GM13976 (cell line): ENCODE measurements at regions of chr17 and their contacts with region 1.

Region 1: GRCh38 chr17:31216053-31216751 is 80.8 kb downstream of the OMG start:
- DNase-seq: peak; percentile 27
- CTCF ChIP-seq: peak; percentile 29

Region 2: DNA sequence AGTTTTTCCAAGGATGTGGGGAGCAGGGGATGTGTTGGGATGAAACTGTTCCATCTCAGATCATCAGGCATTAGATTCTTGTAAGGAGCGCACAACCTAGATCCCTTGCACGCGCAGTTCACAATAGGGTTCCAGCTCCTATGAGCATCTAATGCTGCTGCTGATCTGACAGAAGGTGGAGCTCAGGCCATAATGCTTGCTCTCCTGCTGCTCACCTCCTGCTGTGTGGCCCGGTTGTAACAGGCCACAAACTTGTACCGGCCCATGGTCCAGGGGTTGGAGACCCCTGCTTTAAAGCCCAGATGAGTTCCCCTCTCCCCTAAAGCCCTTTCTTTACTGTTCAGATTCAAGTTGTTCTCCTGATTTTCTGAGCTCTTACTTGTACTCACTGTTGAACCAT is 200.6 kb before region 1 on chr17:
- in situ Hi-C with region 1: loop called (anchors 10 kb)
- DNase-seq: no peak
- CTCF ChIP-seq: peak; percentile 31